Activated CD4-positive, alpha-beta T cell treated with anti-CD3 and anti-CD28 coated beads, Interleukin-2, amount 10 ng/mL, durations not matched to agents 24 days and 14 days (primary cell): ENCODE measurements at regions of chr9 and their contacts with region 1.

Region 1: GRCh38 chr9:126705767-126706694 is 92.3 kb downstream of the LMX1B start:
- DNase-seq: peak; percentile 93
- H3K4me3 Mint-ChIP-seq: peak overlapping the region; percentile 77
- H3K27ac Mint-ChIP-seq: peak overlapping the region; percentile 71
- H3K4me1 Mint-ChIP-seq: peaks cover 17% of the 10 kb centered on the region
- H3K27me3 Mint-ChIP-seq: peaks cover 21% of the 10 kb centered on the region

Region 2: DNA sequence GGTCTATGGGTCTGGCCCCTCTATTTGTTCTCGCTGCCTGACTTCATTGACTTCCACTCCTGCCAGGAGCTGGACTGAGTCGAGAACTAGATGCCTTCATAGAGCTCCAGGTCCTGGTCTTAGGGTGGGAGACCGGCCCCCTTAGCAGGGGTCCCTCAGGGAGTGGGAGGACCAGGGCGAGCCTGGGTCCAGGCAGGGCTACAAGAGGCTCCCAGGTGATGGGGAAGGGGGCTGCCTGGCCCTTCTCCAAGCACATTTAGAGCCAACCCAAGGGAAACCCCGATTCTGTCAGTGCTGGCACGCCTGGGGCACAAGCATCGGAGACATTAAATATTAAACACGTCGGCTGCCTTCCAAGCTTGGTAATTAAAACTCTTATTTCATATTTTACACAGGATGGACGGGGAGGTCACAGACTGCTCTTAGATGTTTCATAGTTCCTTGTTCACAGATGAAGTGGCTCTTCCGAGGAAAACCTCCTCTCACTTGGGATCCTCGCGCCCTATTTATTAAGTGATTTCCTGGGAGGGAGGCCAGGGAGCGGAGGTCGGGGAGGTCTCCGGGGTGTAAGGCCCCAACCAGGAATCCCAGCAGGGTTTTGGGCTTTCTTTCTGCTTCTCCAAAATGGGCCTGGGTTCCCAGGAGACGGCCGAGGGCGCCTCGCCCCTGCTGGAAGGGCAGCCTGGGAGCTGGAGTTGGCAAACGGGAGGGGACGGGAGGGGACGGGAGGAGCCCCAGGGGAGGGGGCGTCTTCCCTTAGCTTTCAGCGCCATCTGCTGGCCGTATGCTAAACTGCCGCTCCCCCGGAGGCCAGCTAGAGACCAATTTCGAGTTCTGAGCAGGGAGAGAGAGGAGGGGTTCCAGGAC is 75.4 kb after region 1 on chr9:
- intact Hi-C with region 1: loop called (anchors 1 kb)
- DNase-seq: peak; percentile 94
- H3K4me3 Mint-ChIP-seq: no peak overlapping the region
- H3K27ac Mint-ChIP-seq: no peak overlapping the region
- H3K4me1 Mint-ChIP-seq: no peaks in the 10 kb centered on the region
- H3K27me3 Mint-ChIP-seq: peaks cover 21% of the 10 kb centered on the region